SK-N-SH (cell line): ENCODE measurements at regions of chr11 and their contacts with region 1.

Region 1: DNA sequence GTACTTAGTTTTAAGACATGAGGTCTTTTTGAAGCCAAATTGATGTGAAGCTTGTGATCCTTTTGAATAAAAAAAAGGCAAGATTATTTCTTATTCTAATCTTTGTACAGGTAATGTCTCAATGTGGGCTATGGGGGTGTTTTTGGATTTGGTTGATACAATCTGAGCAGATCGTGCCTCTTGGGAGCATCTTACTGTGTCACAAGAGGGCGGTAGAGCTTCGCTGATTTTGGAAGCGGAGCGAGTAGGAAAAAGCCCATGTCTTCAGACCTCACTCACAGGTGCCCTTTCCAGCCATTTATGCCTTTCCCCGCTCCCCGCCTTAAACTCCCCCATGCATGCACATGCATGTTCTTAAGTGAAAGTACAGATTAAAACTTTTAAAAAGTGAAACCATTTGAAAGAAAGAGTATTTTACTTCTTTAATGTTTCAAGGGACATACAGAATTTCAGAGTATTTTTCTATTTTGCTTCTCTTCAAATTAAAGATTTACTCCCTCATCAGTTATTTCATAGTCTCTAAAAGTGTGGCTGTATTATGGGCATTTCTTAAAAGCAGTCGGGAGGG is 18.8 kb downstream of the DDX25 start:
- DNase-seq: peak; percentile 74
- H3K4me3 ChIP-seq: no peak overlapping the region; a peak in 1 of 4 replicates
- H3K27ac ChIP-seq: no peak overlapping the region
- H3K4me1 ChIP-seq: peaks cover 0 to 26% of the 10 kb centered on the region in 2 experiments; a peak in 1 of 4 replicates
- H3K27me3 ChIP-seq: peaks cover 38% of the 10 kb centered on the region; the same call in 1 of the 2 replicates
- CTCF ChIP-seq: peak; percentile 90
- EP300 ChIP-seq: no peak
- RAD21 ChIP-seq: peak; percentile 98

Region 2: GRCh38 chr11:125835748-125836147 is 87.3 kb before region 1 on chr11:
- CTCF ChIA-PET with region 1: no interaction called
- POLR2A ChIA-PET with region 1: no interaction called
- DNase-seq: no peak
- H3K4me3 ChIP-seq: no peak overlapping the region
- H3K27ac ChIP-seq: no peak overlapping the region
- H3K4me1 ChIP-seq: no peaks in the 10 kb centered on the region
- H3K27me3 ChIP-seq: no peaks in the 10 kb centered on the region
- CTCF ChIP-seq: no peak
- EP300 ChIP-seq: no peak
- RAD21 ChIP-seq: no peak

Region 3: DNA sequence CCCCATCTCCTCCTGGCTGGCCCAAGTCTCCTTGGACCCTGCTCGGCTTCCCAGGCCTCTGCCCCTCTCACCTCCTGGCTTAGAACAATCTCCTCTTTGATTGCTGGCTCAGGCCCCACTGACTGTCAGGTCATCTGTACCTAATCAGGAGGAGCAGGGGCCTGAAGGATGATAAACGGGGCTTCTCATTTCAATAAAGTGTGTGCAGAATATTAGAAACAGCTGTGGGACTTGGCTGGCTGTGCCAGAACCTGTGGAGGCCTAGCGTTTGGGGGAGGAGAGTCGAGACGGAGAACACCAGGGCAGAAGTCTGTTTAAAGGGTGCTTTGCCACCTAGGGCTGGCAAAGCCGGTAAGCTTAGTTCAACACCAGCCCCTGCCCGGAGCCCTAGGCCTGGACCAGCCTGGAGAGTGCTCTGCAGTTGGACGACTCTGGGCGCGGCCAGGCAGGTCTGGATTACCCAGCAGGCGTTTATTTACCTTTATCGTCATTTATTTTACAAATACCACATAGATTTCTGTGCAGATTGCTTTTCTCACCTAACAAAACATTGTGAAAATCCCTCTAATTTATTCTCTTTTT is 12.6 kb after region 1 on chr11:
- CTCF ChIA-PET with region 1: interaction called, 17 read pairs
- POLR2A ChIA-PET with region 1: no interaction called
- DNase-seq: peak; percentile 88
- H3K4me3 ChIP-seq: peak overlapping the region in 1 of 2 experiments; percentile 9; a peak in 1 of 4 replicates
- H3K27ac ChIP-seq: peak overlapping the region in 1 of 2 experiments; percentile 77; a peak in 2 of 4 replicates
- H3K4me1 ChIP-seq: peaks cover 0 to 24% of the 10 kb centered on the region in 2 experiments; a peak in 2 of 4 replicates
- H3K27me3 ChIP-seq: no peaks in the 10 kb centered on the region
- CTCF ChIP-seq: no peak
- EP300 ChIP-seq: peak; percentile 63 to 94; a peak in 3 of 4 replicates
- RAD21 ChIP-seq: peak; percentile 31

Region 4: GRCh38 chr11:126132319-126132718 is 209.2 kb after region 1 on chr11:
- CTCF ChIA-PET with region 1: interaction called, 10 read pairs
- POLR2A ChIA-PET with region 1: no interaction called
- DNase-seq: no peak
- H3K4me3 ChIP-seq: no peak overlapping the region
- H3K27ac ChIP-seq: no peak overlapping the region
- H3K4me1 ChIP-seq: peaks cover 13 to 29% of the 10 kb centered on the region in 2 experiments; a peak in 2 of 4 replicates
- H3K27me3 ChIP-seq: peaks cover 1% of the 10 kb centered on the region; the same call in 1 of the 2 replicates
- CTCF ChIP-seq: no peak
- EP300 ChIP-seq: no peak
- RAD21 ChIP-seq: no peak